ENCODE measurements at regions of chr5 and their contacts with region 1.

Region 1: DNA sequence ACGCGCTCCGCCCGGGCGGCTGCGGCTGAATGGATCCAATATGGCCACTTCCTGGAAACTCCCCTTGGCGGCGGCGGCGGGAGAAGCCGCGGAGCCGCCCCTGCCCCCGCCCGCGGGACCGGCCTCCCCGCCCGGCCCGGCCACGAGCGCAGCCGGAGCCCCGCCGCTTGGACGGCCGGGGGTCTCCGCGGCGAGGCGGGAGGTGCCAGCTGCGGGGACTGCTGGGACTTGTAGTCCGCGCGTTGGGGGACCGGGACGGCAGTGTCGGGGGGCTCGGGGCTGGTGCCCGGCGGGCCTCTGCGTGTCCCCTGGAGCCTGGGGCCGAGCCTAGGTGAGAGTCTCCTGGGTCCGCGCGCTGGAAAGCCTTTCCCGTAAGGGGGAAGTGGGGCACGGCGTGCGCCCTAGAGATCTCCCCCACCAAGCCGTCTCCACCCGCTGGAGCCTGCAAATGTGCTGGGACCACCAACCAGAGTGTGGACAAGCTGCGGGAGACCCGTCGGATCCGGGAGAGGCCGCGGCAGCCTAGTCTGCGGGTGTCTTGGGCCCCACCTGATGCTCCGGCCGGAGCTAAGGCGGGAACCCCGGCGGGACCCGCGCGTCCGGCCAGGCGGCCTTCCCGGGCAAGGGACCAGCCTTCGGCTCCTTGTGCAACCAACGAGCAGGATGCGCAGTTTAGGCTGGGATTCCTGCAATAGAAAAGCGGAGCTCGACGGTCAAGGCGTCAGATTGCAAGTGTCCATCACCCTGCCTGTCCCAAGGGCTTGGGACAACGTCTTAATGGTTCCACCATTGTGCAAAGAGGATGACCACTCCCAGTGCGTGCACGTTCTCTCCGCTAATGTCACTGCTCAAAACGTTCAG is at the start of gene SEPTIN8:
- DNase-seq: peak; percentile 33
- H3K4me3 ChIP-seq: peak within 1 kb of the TSS; percentile 52 to 75 (median 62)
- H3K27ac ChIP-seq: peak within 1 kb of the TSS; percentile 35
- H3K4me1 ChIP-seq: peaks cover 26% of the 10 kb centered on the region
- H3K27me3 ChIP-seq: no peaks in the 10 kb centered on the region
- CTCF ChIP-seq: no peak
- POLR2A ChIP-seq: no peak
- total RNA-seq, gene SEPTIN8: 77.2 and 82.1 TPM in 2 replicates

Region 2: GRCh38 chr5:132576123-132576522 is 201.3 kb before region 1 on chr5:
- CTCF ChIA-PET with region 1: no interaction called
- POLR2A ChIA-PET with region 1: no interaction called
- dilution Hi-C with region 1: no loop called
- intact Hi-C with region 1: no loop called
- DNase-seq: no peak
- H3K4me3 ChIP-seq: no peak overlapping the region
- H3K27ac ChIP-seq: no peak overlapping the region
- H3K4me1 ChIP-seq: no peaks in the 10 kb centered on the region
- H3K27me3 ChIP-seq: no peaks in the 10 kb centered on the region
- CTCF ChIP-seq: no peak
- POLR2A ChIP-seq: no peak

Region 3: GRCh38 chr5:132813599-132814502 is 36.4 kb after region 1 on chr5:
- CTCF ChIA-PET with region 1: interaction called, 19 read pairs
- POLR2A ChIA-PET with region 1: interaction called, 6 read pairs
- dilution Hi-C with region 1: no loop called
- intact Hi-C with region 1: loop called (anchors 1 kb)
- DNase-seq: peak; percentile 21
- H3K4me3 ChIP-seq: peak overlapping the region in 2 of 3 experiments; percentile 9 to 11
- H3K27ac ChIP-seq: no peak overlapping the region
- H3K4me1 ChIP-seq: no peaks in the 10 kb centered on the region
- H3K27me3 ChIP-seq: peaks cover 19 to 33% of the 10 kb centered on the region in 2 experiments
- CTCF ChIP-seq: no peak
- POLR2A ChIP-seq: no peak

Region 4: DNA sequence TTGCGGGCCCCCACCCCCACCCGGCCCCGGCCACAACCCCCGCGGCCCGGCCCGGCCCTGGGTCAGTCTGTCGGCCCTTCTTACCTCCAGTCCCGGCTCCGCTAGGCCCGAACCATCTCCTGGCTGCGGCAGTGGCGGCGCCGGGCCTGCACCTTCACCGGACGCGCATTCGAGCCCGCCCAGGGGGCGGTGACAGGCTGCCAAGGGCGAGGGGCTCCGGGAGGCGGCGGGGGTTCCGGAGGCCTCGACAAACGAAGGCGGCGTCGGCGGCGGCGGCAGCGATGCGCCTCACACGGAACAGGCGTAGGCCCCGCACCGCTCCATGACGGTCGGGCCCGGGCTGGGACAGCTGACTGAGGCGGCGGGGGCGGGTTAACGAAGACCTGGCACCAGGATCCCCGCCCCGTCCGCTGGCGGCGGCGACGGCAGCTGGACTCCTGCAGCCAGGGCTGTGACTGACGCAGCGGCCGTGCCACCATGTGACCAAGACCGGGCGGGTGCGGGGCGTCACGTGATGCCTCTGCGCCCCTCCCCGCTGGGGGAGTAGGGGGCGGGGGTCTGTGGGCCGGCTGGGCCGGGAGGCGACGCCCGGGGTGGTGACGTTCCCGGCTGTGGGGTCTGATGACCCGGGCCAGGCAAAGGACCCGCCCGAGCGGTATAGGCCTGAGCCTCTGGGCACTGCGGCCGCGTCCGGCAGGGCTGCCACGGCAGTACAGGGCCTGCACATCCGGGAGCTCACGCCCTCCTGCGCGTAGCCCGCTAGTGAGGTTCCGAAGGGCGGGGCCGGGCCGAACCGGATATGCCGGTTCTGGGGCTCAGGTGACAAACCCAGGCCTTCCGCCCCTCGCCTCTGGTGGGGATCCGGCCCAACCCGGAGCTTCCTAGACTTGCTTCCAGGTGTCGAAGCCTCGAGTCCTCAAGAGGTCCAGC is 186.0 kb after region 1 on chr5 and contains the start of gene AFF4:
- CTCF ChIA-PET with region 1: no interaction called
- POLR2A ChIA-PET with region 1: no interaction called
- dilution Hi-C with region 1: no loop called
- intact Hi-C with region 1: no loop called
- DNase-seq: peak; percentile 97
- H3K4me3 ChIP-seq: peak within 1 kb of the TSS; percentile 83 to 98 (median 84)
- H3K27ac ChIP-seq: peak within 1 kb of the TSS; percentile 81
- H3K4me1 ChIP-seq: peaks cover 15% of the 10 kb centered on the region
- H3K27me3 ChIP-seq: no peaks in the 10 kb centered on the region
- CTCF ChIP-seq: no peak
- POLR2A ChIP-seq: peak; percentile 90
- total RNA-seq, gene AFF4: 85.5 and 88.3 TPM in 2 replicates